GM12878 (cell line): ENCODE measurements at regions of chr3 and their contacts with region 1.

Region 1: GRCh38 chr3:27659279-27660021 is 62.7 kb downstream of the EOMES start:
- DNase-seq: no peak
- ATAC-seq: peak; percentile 85
- H3K4me3 ChIP-seq: no peak overlapping the region
- H3K27ac ChIP-seq: no peak overlapping the region
- H3K4me1 ChIP-seq: no peaks in the 10 kb centered on the region
- H3K27me3 ChIP-seq: no peaks in the 10 kb centered on the region
- CTCF ChIP-seq: peak; percentile 69 to 86 (median 80)
- EP300 ChIP-seq: no peak
- POLR2A ChIP-seq: no peak
- RAD21 ChIP-seq: peak; percentile 55

Region 2: GRCh38 chr3:27312044-27312668 is 347.3 kb before region 1 on chr3:
- CTCF ChIA-PET with region 1: no interaction called
- POLR2A ChIA-PET with region 1: no interaction called
- RAD21 ChIA-PET with region 1: no interaction called
- SMC1A ChIA-PET with region 1: interaction called, 3 read pairs
- in situ Hi-C with region 1: no loop called
- intact Hi-C with region 1: loop called (anchors 2 kb)
- DNase-seq: peak; percentile 15
- ATAC-seq: peak; percentile 94
- H3K4me3 ChIP-seq: no peak overlapping the region
- H3K27ac ChIP-seq: no peak overlapping the region
- H3K4me1 ChIP-seq: no peaks in the 10 kb centered on the region
- H3K27me3 ChIP-seq: no peaks in the 10 kb centered on the region
- CTCF ChIP-seq: peak; percentile 64 to 77 (median 76); a peak in 5 of 6 replicates
- EP300 ChIP-seq: no peak
- POLR2A ChIP-seq: no peak
- RAD21 ChIP-seq: peak; percentile 83

Region 3: GRCh38 chr3:27556887-27557286 is 102.6 kb before region 1 on chr3:
- CTCF ChIA-PET with region 1: no interaction called
- POLR2A ChIA-PET with region 1: no interaction called
- RAD21 ChIA-PET with region 1: no interaction called
- SMC1A ChIA-PET with region 1: no interaction called
- in situ Hi-C with region 1: no loop called
- intact Hi-C with region 1: no loop called
- DNase-seq: no peak
- ATAC-seq: no peak
- H3K4me3 ChIP-seq: no peak overlapping the region
- H3K27ac ChIP-seq: no peak overlapping the region
- H3K4me1 ChIP-seq: no peaks in the 10 kb centered on the region
- H3K27me3 ChIP-seq: no peaks in the 10 kb centered on the region; a peak in 1 of 4 replicates
- CTCF ChIP-seq: no peak
- EP300 ChIP-seq: no peak
- POLR2A ChIP-seq: no peak
- RAD21 ChIP-seq: no peak

Region 4: DNA sequence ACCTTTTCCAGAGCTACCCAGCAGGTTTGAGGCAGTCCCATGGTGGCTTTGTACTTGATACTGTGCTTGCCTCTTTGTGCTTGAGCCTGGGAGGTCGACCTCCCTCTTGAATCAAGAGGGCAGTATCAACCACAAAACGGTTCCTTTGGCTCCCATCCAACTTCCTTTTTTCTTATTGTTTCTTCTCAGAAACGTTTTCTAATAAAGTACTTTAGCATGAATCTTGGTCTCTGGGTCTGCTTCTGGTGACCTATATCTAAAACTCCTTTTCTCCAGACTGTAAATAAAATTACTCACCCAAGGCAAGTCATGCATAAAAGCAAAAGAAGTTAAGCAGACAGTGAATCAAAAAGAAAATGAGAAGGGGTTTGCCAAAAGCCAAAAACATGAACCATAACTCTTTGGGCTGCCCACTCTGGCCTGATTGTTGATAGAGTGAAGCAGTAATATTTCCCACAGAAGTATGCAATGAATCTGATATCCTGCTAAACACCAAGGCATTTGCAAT is 63.1 kb before region 1 on chr3:
- CTCF ChIA-PET with region 1: interaction called, 3 read pairs
- POLR2A ChIA-PET with region 1: no interaction called
- RAD21 ChIA-PET with region 1: no interaction called
- SMC1A ChIA-PET with region 1: no interaction called
- in situ Hi-C with region 1: no loop called
- intact Hi-C with region 1: loop called (anchors 5 kb)
- DNase-seq: peak; percentile 56
- ATAC-seq: peak; percentile 84
- H3K4me3 ChIP-seq: no peak overlapping the region
- H3K27ac ChIP-seq: no peak overlapping the region
- H3K4me1 ChIP-seq: peaks cover 18% of the 10 kb centered on the region
- H3K27me3 ChIP-seq: no peaks in the 10 kb centered on the region; a peak in 1 of 4 replicates
- CTCF ChIP-seq: peak in 1 of 3 experiments; percentile 11; a peak in 1 of 6 replicates
- EP300 ChIP-seq: 0 out of 4 replicates have a peak, but pooled peaks of 1 of the 2 experiments have one; percentile 15
- POLR2A ChIP-seq: no peak
- RAD21 ChIP-seq: peak; percentile 23; the same call in 1 of the 2 replicates

Region 5: DNA sequence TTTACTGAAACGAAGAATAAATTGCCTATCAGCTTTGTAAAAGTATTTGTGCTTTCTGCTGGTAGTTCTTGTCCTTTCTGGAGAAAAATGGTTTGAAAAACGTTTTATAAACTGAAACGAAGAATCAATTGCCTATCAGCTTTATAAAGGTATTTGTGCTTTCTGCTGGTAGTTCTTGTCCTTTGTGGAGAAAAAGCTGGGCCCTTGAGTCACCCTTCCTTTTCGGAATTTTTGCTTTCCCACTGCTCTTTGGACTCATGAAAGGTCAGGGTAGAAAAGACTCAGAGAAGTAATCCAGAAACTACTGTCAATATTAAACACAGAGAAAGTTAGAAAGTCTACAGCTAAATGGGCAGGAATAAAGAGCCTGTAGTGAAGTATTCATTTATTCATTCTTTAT is 10.2 kb before region 1 on chr3:
- CTCF ChIA-PET with region 1: interaction called, 26 read pairs
- POLR2A ChIA-PET with region 1: no interaction called
- RAD21 ChIA-PET with region 1: no interaction called
- SMC1A ChIA-PET with region 1: interaction called, 5 read pairs
- in situ Hi-C with region 1: no loop called
- intact Hi-C with region 1: no loop called
- DNase-seq: no peak
- ATAC-seq: no peak
- H3K4me3 ChIP-seq: no peak overlapping the region
- H3K27ac ChIP-seq: no peak overlapping the region
- H3K4me1 ChIP-seq: no peaks in the 10 kb centered on the region
- H3K27me3 ChIP-seq: no peaks in the 10 kb centered on the region
- CTCF ChIP-seq: no peak
- EP300 ChIP-seq: no peak
- POLR2A ChIP-seq: no peak
- RAD21 ChIP-seq: no peak

Region 6: DNA sequence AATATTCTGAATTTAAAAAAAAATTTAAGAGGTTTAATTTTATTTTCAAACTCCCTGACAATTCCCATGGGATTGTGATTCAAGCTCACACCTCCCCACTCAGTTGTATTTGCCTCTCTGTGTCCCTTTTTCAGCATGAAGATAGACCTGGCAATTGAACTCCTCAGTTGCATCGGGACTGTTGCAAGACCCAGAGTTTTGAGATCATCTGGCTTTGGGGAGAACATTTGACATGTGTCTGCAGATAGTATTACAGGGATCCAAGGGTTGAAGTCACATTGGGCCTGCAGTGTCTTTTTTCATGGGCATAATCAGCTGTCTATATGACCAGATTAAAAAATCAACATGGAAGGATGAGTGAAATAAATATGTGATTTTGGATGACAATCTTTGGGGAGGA is 153.8 kb after region 1 on chr3:
- CTCF ChIA-PET with region 1: no interaction called
- POLR2A ChIA-PET with region 1: no interaction called
- RAD21 ChIA-PET with region 1: no interaction called
- SMC1A ChIA-PET with region 1: no interaction called
- in situ Hi-C with region 1: no loop called
- intact Hi-C with region 1: no loop called
- DNase-seq: no peak
- ATAC-seq: no peak
- H3K4me3 ChIP-seq: no peak overlapping the region
- H3K27ac ChIP-seq: no peak overlapping the region
- H3K4me1 ChIP-seq: no peaks in the 10 kb centered on the region
- H3K27me3 ChIP-seq: no peaks in the 10 kb centered on the region
- CTCF ChIP-seq: no peak
- EP300 ChIP-seq: no peak
- POLR2A ChIP-seq: no peak
- RAD21 ChIP-seq: no peak